Activated naive CD4-positive, alpha-beta T cell treated with anti-CD3 and anti-CD28 coated beads for 36 hours (primary cell): ENCODE measurements at regions of chr4 and their contacts with region 1.

Region 1: GRCh38 chr4:26076000-26076587 is 162.1 kb downstream of the SMIM20 start:
- DNase-seq: peak; percentile 80
- H3K4me3 Mint-ChIP-seq: no peak overlapping the region
- H3K27ac Mint-ChIP-seq: peak overlapping the region; percentile 85
- H3K4me1 Mint-ChIP-seq: peaks cover 81% of the 10 kb centered on the region
- H3K27me3 Mint-ChIP-seq: no peaks in the 10 kb centered on the region

Region 2: DNA sequence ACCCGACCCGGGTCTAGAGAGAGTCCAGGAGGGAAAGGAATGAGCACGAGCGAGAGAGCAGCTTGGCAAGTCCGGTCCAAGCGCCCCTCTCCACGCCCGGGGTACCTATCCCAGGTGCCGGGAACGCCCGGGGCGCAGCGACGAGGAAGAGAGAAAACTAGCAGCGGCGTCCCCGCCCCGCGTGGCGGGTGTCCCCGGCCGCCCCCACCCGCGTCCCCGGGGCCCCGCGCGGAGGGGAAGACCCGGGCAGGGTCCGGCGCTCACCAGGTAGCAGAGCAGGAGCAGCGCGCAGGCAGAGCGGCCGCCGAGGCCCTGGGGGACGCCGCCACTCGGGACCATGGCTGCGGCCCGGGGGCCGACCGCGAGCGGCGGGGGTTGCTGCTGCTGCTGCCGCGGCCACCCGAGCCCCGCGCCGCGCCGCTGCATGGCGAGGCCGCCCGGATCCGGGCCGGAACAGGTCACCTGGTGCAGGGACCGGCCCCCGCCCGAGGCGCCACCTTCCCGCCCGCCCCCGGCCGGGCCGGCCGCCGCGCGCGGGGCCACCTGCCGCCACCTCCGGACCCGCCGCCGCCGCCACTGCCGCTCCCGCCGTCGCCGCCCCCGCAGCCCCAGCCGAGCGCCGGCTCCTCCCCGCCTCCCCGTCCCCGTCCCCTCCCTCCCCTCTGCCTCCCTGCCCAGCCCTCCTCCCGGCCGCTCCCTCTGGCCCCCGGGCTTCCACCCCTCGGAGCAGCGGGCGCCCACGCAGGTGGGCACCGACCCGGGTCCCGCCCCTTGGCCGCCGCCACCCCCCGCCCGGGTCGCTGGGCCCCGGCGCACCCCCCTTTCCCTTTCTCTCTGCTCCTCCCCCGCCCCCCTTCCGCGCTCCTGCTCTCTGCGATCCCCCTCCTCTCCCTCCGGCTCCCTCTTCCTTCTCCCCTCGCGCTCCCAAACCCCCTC is 213.4 kb before region 1 on chr4 and contains the start of gene SEL1L3:
- CTCF ChIA-PET with region 1: no interaction called
- intact Hi-C with region 1: loop called (anchors 5 kb)
- DNase-seq: peak; percentile 53
- H3K4me3 Mint-ChIP-seq: peak within 1 kb of the TSS; percentile 93
- H3K27ac Mint-ChIP-seq: peak within 1 kb of the TSS; percentile 92
- H3K4me1 Mint-ChIP-seq: peaks cover 33% of the 10 kb centered on the region
- H3K27me3 Mint-ChIP-seq: no peaks in the 10 kb centered on the region
- total RNA-seq, gene SEL1L3: 32.3 to 38.2 TPM

Region 3: DNA sequence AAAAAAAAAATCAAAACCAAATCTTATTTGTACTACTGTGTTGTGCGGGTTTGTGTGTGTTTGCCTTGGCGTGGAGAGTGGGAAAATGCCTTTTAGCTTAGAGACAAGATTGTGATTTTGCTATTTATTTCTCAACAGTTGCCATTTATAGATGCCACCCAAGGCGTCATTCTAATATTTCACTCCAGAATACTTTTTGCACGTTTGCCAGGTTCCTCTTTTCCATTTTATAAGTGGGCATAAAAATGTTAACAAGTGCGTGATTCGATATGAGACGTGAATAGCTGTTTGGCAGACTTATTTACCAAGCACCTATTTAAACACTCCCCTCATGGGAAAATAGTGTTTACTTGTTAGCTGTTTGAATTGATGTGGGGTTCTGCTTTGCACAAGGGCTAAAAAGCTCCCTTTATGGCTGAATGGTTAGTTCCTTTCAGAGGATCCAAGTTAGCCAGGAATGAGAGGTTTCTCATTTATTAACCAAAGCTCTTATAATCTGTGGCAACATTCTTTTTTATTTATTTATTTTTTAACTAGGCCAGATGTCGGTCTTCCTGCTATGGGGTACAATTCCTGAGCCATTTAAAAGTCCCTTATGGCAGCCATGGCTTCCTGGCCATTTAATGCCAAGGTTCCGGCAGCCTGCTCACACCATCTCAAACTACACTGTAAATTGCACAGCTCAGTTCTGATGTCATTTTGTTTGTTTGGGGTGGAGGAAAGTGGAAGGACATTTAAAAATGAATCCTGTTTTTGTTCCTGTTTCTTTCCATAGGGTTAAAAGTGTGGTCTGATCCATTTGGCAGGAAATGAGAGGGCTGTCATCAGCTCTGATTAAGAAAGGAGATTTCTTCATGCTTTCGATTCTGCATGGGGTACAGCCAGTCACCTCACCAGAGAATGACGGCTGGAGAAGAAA is 147.5 kb before region 1 on chr4:
- CTCF ChIA-PET with region 1: no interaction called
- intact Hi-C with region 1: no loop called
- DNase-seq: no peak
- H3K4me3 Mint-ChIP-seq: no peak overlapping the region
- H3K27ac Mint-ChIP-seq: peak overlapping the region; percentile 17
- H3K4me1 Mint-ChIP-seq: peaks cover 3% of the 10 kb centered on the region
- H3K27me3 Mint-ChIP-seq: no peaks in the 10 kb centered on the region

Region 4: GRCh38 chr4:25986807-25987206 is 89.3 kb before region 1 on chr4:
- CTCF ChIA-PET with region 1: no interaction called
- intact Hi-C with region 1: loop called (anchors 5 kb)
- DNase-seq: no peak
- H3K4me3 Mint-ChIP-seq: no peak overlapping the region
- H3K27ac Mint-ChIP-seq: no peak overlapping the region
- H3K4me1 Mint-ChIP-seq: peaks cover 6% of the 10 kb centered on the region
- H3K27me3 Mint-ChIP-seq: no peaks in the 10 kb centered on the region

Region 5: DNA sequence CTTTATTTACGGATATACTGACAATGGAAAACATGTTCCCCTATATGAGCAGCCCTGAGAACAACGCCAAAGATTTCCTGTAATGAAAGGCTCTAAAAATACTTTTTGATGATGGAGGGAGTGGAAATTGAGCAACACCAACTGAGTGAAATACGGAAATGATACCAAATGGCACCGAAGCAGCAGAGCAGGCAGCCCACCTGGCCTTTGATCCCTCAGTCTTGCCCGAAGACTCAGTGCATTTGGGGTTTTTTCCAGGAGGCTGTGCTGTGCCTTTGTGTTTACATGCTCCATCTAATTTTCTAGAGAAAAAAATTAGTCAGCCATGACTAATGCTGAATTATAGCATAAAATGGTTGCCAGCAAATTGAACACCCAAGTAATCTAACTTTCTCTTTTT is 74.9 kb after region 1 on chr4:
- CTCF ChIA-PET with region 1: no interaction called
- intact Hi-C with region 1: loop called (anchors 2 kb)
- DNase-seq: peak; percentile 54
- H3K4me3 Mint-ChIP-seq: no peak overlapping the region
- H3K27ac Mint-ChIP-seq: peak overlapping the region; percentile 75
- H3K4me1 Mint-ChIP-seq: peaks cover 16% of the 10 kb centered on the region
- H3K27me3 Mint-ChIP-seq: peaks cover 10% of the 10 kb centered on the region

Region 6: GRCh38 chr4:26583865-26584652 is 508.0 kb after region 1 on chr4 and contains the start of gene TBC1D19:
- CTCF ChIA-PET with region 1: no interaction called
- intact Hi-C with region 1: loop called (anchors 10 kb)
- DNase-seq: peak; percentile 92
- H3K4me3 Mint-ChIP-seq: peak within 1 kb of the TSS; percentile 93
- H3K27ac Mint-ChIP-seq: peak within 1 kb of the TSS; percentile 92
- H3K4me1 Mint-ChIP-seq: peaks cover 32% of the 10 kb centered on the region
- H3K27me3 Mint-ChIP-seq: no peaks in the 10 kb centered on the region
- total RNA-seq, gene TBC1D19: 3.8 to 4.1 TPM

Region 7: DNA sequence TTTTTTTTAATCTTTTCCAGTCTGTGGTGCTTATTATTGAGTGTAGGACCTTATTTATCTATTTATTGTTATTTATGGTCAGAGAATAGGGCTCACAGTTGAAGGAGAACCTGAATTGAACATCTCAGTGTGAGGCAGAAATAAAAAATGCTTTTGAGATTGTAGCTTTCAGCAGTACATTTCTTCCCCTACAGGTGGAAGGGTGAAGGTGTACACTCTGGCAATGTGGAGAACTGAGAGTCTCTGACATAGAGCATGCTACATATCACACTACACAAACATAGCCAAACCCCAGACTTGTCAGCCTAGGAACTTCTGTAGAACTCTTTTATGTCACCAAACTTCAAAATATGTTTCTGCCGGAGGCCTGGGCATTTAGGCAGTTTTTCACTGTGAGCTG is 924.7 kb after region 1 on chr4:
- CTCF ChIA-PET with region 1: no interaction called
- intact Hi-C with region 1: loop called (anchors 1 kb)
- DNase-seq: peak; percentile 30
- H3K4me3 Mint-ChIP-seq: no peak overlapping the region
- H3K27ac Mint-ChIP-seq: no peak overlapping the region
- H3K4me1 Mint-ChIP-seq: peaks cover 63% of the 10 kb centered on the region
- H3K27me3 Mint-ChIP-seq: no peaks in the 10 kb centered on the region